ENCODE measurements at regions of chr7 and their contacts with region 1.

Region 1: GRCh38 chr7:112449902-112450806 is at the start of gene IFRD1:
- DNase-seq: peak; percentile 94 to 99
- ATAC-seq: peak; percentile 89 to 95
- H3K4me3 ChIP-seq: peak within 1 kb of the TSS; percentile 83
- H3K27ac ChIP-seq: peak within 1 kb of the TSS; percentile 91 to 93
- H3K4me1 ChIP-seq: peaks cover 29% of the 10 kb centered on the region
- CTCF ChIP-seq: no peak
- EP300 ChIP-seq: no peak
- POLR2A ChIP-seq: peak; percentile 98
- RAD21 ChIP-seq: no peak; a peak in 2 of 5 replicates
- polyA plus RNA-seq, gene IFRD1: 95.1 and 129 TPM in 2 replicates

Region 2: GRCh38 chr7:112206238-112207044 is 243.7 kb before region 1 on chr7 and contains the starts of genes DOCK4 and ZNF277:
- CTCF ChIA-PET with region 1: no interaction called
- POLR2A ChIA-PET with region 1: interaction called, 12 read pairs
- DNase-seq: peak; percentile 96 to 99
- ATAC-seq: peak; percentile 87 to 93
- H3K4me3 ChIP-seq: peak within 1 kb of the TSS; percentile 89
- H3K27ac ChIP-seq: peak within 1 kb of the TSS; percentile 87 to 90
- H3K4me1 ChIP-seq: peaks cover 32% of the 10 kb centered on the region
- CTCF ChIP-seq: no peak
- EP300 ChIP-seq: no peak
- POLR2A ChIP-seq: peak; percentile 69
- RAD21 ChIP-seq: peak in 1 of 2 experiments; percentile 1; a peak in 3 of 5 replicates
- polyA plus RNA-seq, gene DOCK4: 13.6 and 15.7 TPM in 2 replicates
- polyA plus RNA-seq, gene ZNF277: 25.8 and 31.9 TPM in 2 replicates

Region 3: DNA sequence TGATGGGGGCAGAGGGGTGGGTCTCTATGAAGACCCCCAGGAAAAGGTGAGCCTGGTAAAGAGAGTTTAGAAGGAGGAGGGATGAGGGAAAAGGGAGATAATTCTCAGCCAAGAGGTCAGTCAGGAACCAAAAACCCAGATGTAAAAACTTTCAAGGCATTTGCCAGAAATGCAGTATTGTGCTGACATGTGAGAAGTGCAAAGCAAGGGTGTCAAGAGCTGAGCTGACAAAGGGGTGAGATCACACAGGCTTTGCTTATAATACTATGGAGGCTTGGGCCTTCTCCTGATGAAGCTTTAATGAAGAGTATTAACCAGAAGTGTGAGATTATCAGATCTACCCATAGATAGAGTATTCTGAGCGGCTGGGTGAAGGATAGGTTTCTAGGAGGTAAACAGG is 22.2 kb before region 1 on chr7:
- CTCF ChIA-PET with region 1: no interaction called
- POLR2A ChIA-PET with region 1: interaction called, 11 read pairs
- DNase-seq: no peak
- ATAC-seq: no peak
- H3K4me3 ChIP-seq: no peak overlapping the region
- H3K27ac ChIP-seq: no peak overlapping the region
- H3K4me1 ChIP-seq: peaks cover 8% of the 10 kb centered on the region
- CTCF ChIP-seq: no peak
- EP300 ChIP-seq: no peak
- POLR2A ChIP-seq: no peak
- RAD21 ChIP-seq: no peak

Region 4: GRCh38 chr7:112462236-112462635 is 12.1 kb after region 1 on chr7:
- CTCF ChIA-PET with region 1: interaction called, 5 read pairs
- POLR2A ChIA-PET with region 1: interaction called, 89 read pairs
- DNase-seq: peak in 1 of 2 experiments; percentile 63
- ATAC-seq: peak; percentile 49 to 70
- H3K4me3 ChIP-seq: no peak overlapping the region
- H3K27ac ChIP-seq: no peak overlapping the region
- H3K4me1 ChIP-seq: peaks cover 21% of the 10 kb centered on the region
- CTCF ChIP-seq: no peak
- EP300 ChIP-seq: no peak
- POLR2A ChIP-seq: no peak
- RAD21 ChIP-seq: no peak

Region 5: GRCh38 chr7:112481833-112482670 is 31.9 kb after region 1 on chr7:
- CTCF ChIA-PET with region 1: no interaction called
- POLR2A ChIA-PET with region 1: interaction called, 14 read pairs
- DNase-seq: peak; percentile 39 to 77
- ATAC-seq: peak; percentile 73 to 76
- H3K4me3 ChIP-seq: no peak overlapping the region
- H3K27ac ChIP-seq: peak overlapping the region in 1 of 2 experiments; percentile 11; a peak in 1 of 6 replicates
- H3K4me1 ChIP-seq: peaks cover 44% of the 10 kb centered on the region
- CTCF ChIP-seq: no peak
- EP300 ChIP-seq: no peak
- POLR2A ChIP-seq: no peak
- RAD21 ChIP-seq: no peak

Region 6: DNA sequence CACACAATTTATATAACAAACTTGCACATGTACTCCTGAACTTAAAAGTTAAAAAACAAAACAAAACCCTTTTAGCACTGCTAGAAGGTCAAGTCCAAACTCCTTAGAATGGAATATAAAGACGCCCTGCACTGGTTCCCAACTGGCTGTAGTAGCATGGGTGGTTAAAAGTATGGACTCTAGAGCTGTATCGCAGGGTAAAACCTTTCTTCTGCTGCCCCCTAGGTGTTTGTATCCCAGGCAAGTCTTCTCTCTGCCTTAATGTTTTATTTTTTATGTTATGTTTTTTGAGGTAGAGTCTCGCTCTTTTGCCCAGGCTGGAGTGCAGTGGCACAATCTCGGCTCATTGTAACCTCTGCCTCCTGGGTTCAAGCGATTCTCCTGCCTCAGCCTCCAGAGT is 65.8 kb after region 1 on chr7:
- CTCF ChIA-PET with region 1: no interaction called
- POLR2A ChIA-PET with region 1: no interaction called
- DNase-seq: peak in 1 of 2 experiments; percentile 14
- ATAC-seq: peak in 1 of 2 experiments; percentile 72; a peak in 3 of 6 replicates
- H3K4me3 ChIP-seq: no peak overlapping the region
- H3K27ac ChIP-seq: no peak overlapping the region
- H3K4me1 ChIP-seq: no peaks in the 10 kb centered on the region
- CTCF ChIP-seq: no peak
- EP300 ChIP-seq: no peak
- POLR2A ChIP-seq: no peak
- RAD21 ChIP-seq: peak in 1 of 2 experiments; percentile 22; a peak in 2 of 5 replicates

Region 7: GRCh38 chr7:112584290-112584689 is 134.1 kb after region 1 on chr7:
- CTCF ChIA-PET with region 1: no interaction called
- POLR2A ChIA-PET with region 1: no interaction called
- DNase-seq: no peak
- ATAC-seq: no peak
- H3K4me3 ChIP-seq: no peak overlapping the region
- H3K27ac ChIP-seq: no peak overlapping the region
- H3K4me1 ChIP-seq: no peaks in the 10 kb centered on the region
- CTCF ChIP-seq: no peak
- EP300 ChIP-seq: no peak
- POLR2A ChIP-seq: no peak
- RAD21 ChIP-seq: no peak